MCF 10A (cell line): ENCODE measurements at regions of chr4 and their contacts with region 1.

Region 1: DNA sequence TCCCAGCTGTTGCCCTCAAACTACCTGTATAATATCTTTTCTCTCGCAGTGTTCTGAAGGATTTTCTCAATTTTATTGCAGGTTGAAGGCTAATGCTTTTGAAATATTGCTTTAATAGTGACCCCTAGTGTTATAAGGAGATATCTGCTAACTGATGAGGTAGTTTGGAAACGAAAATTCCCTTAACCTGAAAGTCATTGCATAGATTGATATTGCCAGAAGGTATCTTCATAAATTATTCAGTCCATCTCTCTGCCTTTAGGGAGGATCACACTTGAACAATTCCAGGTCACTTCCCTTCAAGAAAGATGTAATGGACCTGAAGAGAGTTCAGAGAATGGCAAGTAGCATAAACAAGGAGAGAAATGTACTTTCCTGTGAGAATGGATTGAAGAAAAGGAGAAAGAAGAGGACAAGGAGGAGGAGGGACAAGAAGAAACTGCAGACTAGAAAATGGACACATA is 44.1 kb downstream of the TIGD4 start:
- DNase-seq: peak; percentile 41
- H3K4me3 Mint-ChIP-seq: no peak overlapping the region
- H3K27ac Mint-ChIP-seq: no peak overlapping the region
- H3K4me1 Mint-ChIP-seq: peaks cover 10% of the 10 kb centered on the region
- H3K27me3 Mint-ChIP-seq: peaks cover 11% of the 10 kb centered on the region
- CTCF ChIP-seq: peak; percentile 62

Region 2: DNA sequence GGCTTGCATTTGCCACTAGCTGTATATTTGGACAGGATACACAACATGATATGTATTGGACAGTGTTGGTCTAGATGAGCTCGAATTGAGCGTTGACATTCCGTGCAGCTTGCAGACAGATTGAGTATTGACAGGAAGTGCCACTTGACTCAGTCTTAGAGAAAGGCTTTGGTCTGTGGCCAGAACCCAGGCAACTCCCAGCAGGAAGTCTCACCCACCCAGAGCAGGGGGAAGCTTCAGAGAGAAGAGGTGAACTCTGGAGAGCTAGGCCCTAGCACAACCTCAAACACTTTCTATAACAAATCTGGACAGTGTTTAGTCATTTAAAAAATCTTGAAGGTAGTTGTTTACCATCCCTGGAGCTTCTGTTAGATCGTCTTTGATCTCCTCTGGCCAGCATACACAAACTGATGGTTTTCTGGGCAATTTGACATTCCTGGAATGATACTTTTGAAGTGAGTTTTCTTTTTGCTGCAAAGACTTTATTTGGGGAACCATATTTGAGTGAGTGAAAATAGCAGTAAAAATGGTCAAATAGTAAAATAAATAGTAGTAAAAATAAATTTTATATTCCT is 479.9 kb before region 1 on chr4:
- CTCF ChIA-PET with region 1: no interaction called
- POLR2A ChIA-PET with region 1: no interaction called
- intact Hi-C with region 1: no loop called
- DNase-seq: peak; percentile 57
- H3K4me3 Mint-ChIP-seq: no peak overlapping the region
- H3K27ac Mint-ChIP-seq: no peak overlapping the region
- H3K4me1 Mint-ChIP-seq: peaks cover 19% of the 10 kb centered on the region
- H3K27me3 Mint-ChIP-seq: no peaks in the 10 kb centered on the region
- CTCF ChIP-seq: no peak

Region 3: DNA sequence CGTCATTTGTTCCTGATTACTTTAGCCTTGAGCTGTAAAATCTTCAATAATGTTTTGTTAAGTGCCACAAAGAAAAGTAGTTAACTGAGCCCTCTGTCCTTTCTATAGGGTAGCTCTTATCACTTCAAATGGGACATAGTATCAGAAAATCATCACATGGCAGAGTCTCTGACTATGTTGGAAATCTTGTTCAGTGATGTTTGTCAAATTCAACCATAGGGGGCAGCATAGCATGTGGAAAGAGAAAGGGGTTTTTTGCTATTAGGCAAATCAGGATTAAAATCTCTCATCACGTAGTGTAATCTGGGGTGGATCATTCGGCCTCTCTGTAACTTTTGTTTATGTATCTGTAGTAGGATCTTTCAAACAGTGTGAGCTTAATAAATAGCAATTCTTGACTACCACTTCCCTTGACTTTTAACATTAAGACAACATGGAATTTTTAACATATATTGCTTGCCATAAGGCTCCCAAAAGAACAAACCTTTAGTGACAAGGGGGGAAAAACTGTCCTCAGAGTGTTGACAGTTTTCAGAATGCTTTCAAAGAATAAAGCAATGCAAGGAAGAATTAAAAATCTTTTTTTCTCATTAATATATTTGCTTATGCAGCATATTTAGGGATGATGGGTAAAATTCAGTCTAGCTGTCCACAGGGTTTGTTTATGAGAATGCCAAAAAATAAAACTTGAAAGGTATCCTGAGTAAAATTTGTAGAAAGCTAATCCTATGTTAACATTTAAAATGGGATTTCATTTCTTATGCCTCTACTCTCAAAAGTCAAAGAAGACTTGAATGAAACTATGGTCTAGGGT is 326.7 kb before region 1 on chr4:
- CTCF ChIA-PET with region 1: interaction called, 13 read pairs
- POLR2A ChIA-PET with region 1: no interaction called
- intact Hi-C with region 1: loop called (anchors 5 kb)
- DNase-seq: peak; percentile 60
- H3K4me3 Mint-ChIP-seq: no peak overlapping the region
- H3K27ac Mint-ChIP-seq: no peak overlapping the region
- H3K4me1 Mint-ChIP-seq: peaks cover 6% of the 10 kb centered on the region
- H3K27me3 Mint-ChIP-seq: no peaks in the 10 kb centered on the region
- CTCF ChIP-seq: peak; percentile 55

Region 4: DNA sequence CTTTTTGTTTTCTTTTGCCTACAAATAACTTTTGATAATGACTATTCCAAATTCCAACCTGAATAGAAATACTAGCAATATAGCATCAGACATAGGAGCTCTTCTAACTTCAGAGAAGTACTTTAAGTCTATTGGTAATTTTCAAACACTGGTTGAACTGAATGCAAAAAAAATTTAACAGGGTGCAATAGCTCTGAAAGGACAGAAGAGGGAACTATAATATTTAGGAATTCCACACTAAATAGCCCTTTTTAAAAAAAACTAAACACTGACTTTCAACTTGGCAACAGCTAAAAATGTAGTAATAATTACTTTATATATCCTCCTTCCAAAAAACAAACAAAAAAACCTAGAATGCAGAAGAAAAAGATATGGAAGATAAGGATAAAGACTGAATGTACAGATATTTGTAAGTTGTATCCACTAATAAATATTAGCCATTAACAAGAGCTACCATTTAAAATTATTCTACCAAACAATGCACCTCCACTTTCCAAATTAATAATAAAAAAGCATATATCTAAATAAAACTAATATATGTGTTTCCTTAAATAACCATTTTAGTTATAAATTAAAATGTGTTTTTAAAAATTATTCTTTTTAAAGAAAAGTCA is 280.9 kb before region 1 on chr4:
- CTCF ChIA-PET with region 1: interaction called, 17 read pairs
- POLR2A ChIA-PET with region 1: interaction called, 3 read pairs
- intact Hi-C with region 1: loop called (anchors 1 kb)
- DNase-seq: peak; percentile 24
- H3K4me3 Mint-ChIP-seq: no peak overlapping the region
- H3K27ac Mint-ChIP-seq: no peak overlapping the region
- H3K4me1 Mint-ChIP-seq: peaks cover 35% of the 10 kb centered on the region
- H3K27me3 Mint-ChIP-seq: no peaks in the 10 kb centered on the region
- CTCF ChIP-seq: peak; percentile 60

Region 5: DNA sequence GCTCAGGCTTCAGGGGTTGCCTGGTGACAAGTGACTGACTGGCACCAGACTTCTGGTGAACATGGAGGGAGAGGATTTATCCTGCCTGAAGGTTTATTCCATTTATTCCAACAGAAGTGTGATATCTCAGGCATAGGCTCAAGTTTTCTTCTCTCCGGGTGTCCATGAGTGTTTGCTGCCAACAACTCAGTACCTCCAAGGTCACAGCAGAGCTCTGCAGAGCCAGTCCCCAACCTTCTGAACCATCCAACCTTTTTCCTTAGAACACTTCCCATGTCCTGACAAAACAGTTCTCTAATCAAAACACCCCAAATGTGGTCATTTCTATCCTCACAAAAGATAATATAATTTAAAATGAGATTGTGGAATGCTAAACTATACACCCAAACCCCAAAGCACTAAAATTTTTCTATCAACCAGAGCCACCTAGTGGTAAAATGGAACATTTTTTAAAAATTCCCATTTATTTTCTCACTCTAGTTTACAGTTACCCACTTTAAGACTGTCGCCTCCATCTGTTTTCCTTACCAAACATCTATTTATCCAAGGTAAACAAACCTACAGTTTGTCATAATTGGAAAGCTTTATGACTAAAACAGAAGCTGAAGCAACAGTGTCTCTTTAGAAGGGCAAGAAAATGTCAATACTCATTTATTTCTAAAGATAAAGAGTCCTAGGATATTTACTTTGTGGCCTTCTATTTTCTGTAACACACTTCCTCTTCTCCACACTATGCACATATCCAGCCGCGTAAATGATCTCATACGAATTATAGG is 95.2 kb before region 1 on chr4:
- CTCF ChIA-PET with region 1: interaction called, 19 read pairs
- POLR2A ChIA-PET with region 1: no interaction called
- intact Hi-C with region 1: loop called (anchors 1 kb)
- DNase-seq: peak; percentile 38
- H3K4me3 Mint-ChIP-seq: no peak overlapping the region
- H3K27ac Mint-ChIP-seq: no peak overlapping the region
- H3K4me1 Mint-ChIP-seq: no peaks in the 10 kb centered on the region
- H3K27me3 Mint-ChIP-seq: no peaks in the 10 kb centered on the region
- CTCF ChIP-seq: peak; percentile 39

Region 6: GRCh38 chr4:152646221-152646620 is 89.2 kb before region 1 on chr4:
- CTCF ChIA-PET with region 1: interaction called, 19 read pairs
- POLR2A ChIA-PET with region 1: no interaction called
- intact Hi-C with region 1: no loop called
- DNase-seq: no peak
- H3K4me3 Mint-ChIP-seq: no peak overlapping the region
- H3K27ac Mint-ChIP-seq: no peak overlapping the region
- H3K4me1 Mint-ChIP-seq: no peaks in the 10 kb centered on the region
- H3K27me3 Mint-ChIP-seq: no peaks in the 10 kb centered on the region
- CTCF ChIP-seq: no peak

Region 7: GRCh38 chr4:152779513-152780266 is 44.3 kb after region 1 on chr4 and contains the starts of genes ARFIP1 and TIGD4:
- CTCF ChIA-PET with region 1: interaction called, 11 read pairs
- POLR2A ChIA-PET with region 1: no interaction called
- intact Hi-C with region 1: no loop called
- DNase-seq: peak; percentile 97
- H3K4me3 Mint-ChIP-seq: peak within 1 kb of the TSS; percentile 87
- H3K27ac Mint-ChIP-seq: peak within 1 kb of the TSS; percentile 91
- H3K4me1 Mint-ChIP-seq: peaks cover 24% of the 10 kb centered on the region
- H3K27me3 Mint-ChIP-seq: peaks cover 13% of the 10 kb centered on the region
- CTCF ChIP-seq: no peak
- total RNA-seq, gene ARFIP1: 26.7 and 35.5 TPM in 2 replicates
- total RNA-seq, gene TIGD4: 0.12 and 0.32 TPM in 2 replicates

Region 8: DNA sequence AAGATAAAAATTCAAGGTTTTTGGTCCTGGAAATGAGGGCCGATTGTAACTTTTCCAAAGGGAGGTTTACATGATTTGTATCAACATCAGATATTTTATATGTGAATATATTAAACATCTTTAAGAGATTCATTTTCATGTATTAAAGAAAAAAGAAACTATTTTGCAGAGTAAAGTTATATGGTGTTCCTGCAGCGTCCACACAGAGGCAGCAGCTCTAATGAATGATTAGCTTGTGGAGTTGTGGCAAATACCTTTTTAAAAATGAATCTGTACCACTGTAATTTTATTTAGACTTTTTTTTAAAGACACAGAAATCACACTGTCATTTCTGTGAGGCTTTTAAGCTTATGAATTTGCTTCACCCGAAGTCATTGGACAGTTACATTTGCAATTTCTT is 175.1 kb after region 1 on chr4:
- CTCF ChIA-PET with region 1: no interaction called
- POLR2A ChIA-PET with region 1: no interaction called
- intact Hi-C with region 1: no loop called
- DNase-seq: no peak
- H3K4me3 Mint-ChIP-seq: no peak overlapping the region
- H3K27ac Mint-ChIP-seq: no peak overlapping the region
- H3K4me1 Mint-ChIP-seq: no peaks in the 10 kb centered on the region
- H3K27me3 Mint-ChIP-seq: no peaks in the 10 kb centered on the region
- CTCF ChIP-seq: no peak